HEK293 (cell line): ENCODE measurements at regions of chr2 and their contacts with region 1.

Region 1: GRCh38 chr2:217142649-217143266 is 282.9 kb upstream of the TNP1 start:
- H3K4me3 ChIP-seq: no peak overlapping the region
- H3K27ac ChIP-seq: no peak overlapping the region
- H3K4me1 ChIP-seq: no peaks in the 10 kb centered on the region
- CTCF ChIP-seq: no peak

Region 2: DNA sequence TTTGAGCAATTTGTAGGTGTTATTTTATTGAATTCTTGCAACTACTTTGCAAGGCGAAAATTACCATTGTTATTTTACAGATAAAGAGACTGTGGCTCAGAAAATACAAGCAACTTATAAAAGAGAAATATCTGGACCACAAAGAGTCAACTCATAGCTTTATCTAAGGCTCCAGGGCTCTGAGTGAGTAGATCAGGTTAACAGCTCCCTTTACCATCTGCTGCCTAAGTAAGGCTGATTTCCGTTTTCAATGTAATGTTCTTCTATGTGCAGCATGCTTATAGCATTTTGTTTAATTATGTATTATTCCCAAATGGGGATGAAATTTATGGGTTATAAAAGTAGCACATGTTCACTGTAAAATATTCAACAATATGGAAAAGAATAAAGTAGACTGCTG is 16.2 kb after region 1 on chr2:
- CTCF ChIA-PET with region 1: interaction called, 11 read pairs
- POLR2A ChIA-PET with region 1: no interaction called
- H3K4me3 ChIP-seq: no peak overlapping the region
- H3K27ac ChIP-seq: no peak overlapping the region
- H3K4me1 ChIP-seq: peaks cover 10% of the 10 kb centered on the region
- CTCF ChIP-seq: no peak

Region 3: DNA sequence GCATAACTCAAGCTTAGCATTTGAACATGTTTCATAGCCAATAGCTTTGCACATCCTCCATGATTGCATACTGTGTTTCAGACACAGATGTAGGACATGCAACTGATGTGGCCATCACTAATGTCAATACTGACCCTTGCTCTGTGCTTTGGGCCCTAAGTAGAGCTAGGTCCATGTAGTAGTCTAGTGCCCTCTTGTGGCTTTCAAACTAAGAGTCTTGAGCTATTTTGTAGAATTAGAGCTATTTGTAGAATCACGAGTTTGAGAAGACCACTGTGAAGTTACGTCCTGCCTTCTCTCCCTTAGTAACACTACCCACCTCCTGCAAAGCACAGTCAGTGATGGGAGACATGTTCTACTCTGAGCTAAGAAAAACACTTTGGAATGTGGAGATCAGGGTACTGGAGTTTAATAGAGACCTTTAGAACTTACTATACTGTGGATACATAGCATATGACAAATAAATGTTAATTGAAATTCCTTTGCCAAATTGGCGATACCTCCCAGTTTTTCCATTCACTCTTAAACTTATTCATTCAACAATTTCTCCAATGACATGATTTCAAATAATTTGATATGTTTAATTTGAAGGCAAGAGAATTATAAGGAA is 23.6 kb after region 1 on chr2:
- CTCF ChIA-PET with region 1: interaction called, 17 read pairs
- POLR2A ChIA-PET with region 1: no interaction called
- H3K4me3 ChIP-seq: no peak overlapping the region
- H3K27ac ChIP-seq: no peak overlapping the region
- H3K4me1 ChIP-seq: peaks cover 9% of the 10 kb centered on the region
- CTCF ChIP-seq: peak; percentile 9; the same call in 1 of the 2 replicates

Region 4: DNA sequence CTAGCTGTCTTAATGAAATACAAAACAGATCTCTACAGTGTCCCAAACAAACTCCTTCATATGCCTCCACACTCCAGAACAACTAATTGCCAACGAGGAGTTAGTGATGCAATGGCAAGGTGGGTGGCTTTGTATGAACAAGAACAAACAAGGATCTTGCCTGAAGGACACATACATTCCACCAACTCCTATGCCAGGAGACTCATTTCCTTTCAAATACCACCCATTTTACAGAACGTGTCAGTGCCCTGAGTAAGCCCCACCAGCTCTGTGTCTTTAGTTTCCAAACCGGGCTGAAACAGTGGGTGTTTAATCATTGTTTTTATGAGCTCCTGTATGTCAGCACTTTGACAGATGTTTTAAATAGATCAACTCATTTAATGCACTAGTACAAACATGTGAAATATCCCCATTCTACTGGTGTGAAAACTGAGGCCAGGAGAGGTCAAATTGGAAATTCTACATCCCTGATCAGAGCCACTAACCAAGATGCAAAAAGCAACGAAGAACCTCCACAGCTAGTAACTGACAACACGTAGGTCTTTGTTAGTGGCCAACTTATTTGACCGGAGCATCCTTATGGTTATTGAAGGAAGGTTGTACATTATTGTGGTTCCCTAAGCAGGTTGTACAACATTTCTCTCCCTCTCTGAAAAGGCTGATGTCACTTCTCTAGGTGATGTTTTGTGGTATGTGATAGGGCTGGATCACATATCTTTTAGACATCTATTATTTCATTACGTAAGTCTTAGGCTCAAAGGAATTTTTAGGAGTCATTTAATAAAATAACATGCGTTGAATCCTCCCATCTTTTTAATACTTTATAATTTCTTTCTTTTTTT is 252.0 kb after region 1 on chr2:
- CTCF ChIA-PET with region 1: no interaction called
- POLR2A ChIA-PET with region 1: no interaction called
- H3K4me3 ChIP-seq: no peak overlapping the region
- H3K27ac ChIP-seq: no peak overlapping the region
- H3K4me1 ChIP-seq: no peaks in the 10 kb centered on the region
- CTCF ChIP-seq: no peak